ENCODE measurements at regions of chr20 and their contacts with region 1.

Region 1: DNA sequence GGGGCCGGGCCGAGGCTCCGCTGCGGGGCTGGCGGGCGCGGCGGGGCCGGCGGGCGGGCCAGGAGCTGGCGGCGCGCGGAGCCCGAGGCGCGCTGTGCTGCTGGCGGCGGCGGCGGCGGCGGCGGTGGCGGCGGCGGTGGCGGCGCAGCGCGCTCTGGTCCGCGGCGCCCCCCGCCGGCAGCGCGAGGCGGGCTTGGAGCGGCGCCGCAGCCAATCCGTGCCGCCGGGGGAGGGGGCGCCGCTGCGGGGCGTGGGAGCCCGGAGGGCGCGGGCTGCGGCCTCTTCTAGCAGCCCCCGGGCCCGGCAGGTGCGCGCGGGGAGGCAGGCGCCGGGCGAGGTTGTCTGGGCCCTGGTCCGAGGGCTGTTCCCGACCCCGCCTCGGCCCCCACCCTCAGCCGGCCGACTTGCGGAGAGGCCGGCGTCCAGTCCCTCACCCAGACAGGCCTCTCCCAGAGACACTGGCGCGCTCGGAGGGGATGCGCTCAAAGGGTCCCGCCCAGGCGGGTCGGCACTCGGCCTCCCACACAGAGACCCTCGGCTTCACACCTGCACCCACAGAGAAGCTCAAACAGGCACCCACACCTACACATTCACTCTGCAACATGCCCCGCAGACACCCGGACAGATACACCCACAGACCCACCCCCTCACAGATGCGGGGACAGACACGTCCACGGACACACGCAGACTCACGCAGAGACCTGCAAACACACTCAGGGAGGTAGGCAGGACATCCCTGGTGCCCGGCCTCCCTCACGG is at the start of gene RIMS4:
- DNase-seq: peak; percentile 25
- ATAC-seq: peak; percentile 76
- H3K4me3 Mint-ChIP-seq: peak within 1 kb of the TSS; percentile 28
- H3K27ac Mint-ChIP-seq: no peak within 1 kb of the TSS
- H3K4me1 Mint-ChIP-seq: peaks cover 3% of the 10 kb centered on the region
- H3K27me3 Mint-ChIP-seq: peaks cover 48% of the 10 kb centered on the region
- total RNA-seq, gene RIMS4: not detected

Region 2: DNA sequence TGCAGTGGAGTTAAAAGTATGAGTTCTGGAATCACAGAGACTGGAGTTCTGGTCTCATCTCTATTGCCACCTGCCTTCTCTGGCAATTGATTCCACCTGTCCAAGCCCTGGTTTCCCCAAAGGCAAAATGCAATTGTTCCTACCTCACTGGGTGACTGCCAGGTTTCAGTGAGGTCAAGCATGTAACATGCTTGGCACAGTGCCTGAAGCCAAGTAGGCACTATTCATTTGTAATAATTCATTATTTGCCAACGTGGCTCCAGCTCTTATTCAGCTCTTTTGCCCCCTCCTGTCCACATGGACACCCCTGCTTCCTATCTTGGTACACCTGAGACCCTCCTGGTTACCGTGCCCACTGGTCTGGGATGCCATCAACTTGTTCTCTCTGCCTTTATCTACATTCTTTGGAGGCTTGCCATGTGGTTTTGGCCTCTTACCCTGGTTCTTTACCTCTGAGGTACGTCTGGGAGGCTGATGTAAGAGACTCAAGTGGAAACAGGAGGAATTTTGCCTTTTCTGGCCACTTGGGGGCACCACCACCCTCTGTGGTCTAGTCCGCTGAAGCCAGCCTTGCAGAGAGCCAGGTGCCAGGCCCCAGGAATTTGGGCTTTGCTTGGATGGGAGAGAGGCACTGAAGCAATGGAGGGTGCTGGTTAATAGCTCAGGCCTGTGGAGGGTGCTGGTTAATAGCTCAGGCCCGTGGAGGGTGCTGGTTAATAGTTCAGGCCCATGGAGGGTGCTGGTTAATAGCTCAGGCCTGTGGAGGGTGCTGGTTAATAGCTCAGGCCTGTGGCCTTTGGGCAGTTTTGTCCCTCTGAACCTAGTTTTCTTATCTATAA is 63.2 kb before region 1 on chr20:
- CTCF ChIA-PET with region 1: interaction called, 4 read pairs
- POLR2A ChIA-PET with region 1: no interaction called
- intact Hi-C with region 1: loop called in 1 of 2 experiments (anchors 2 kb)
- DNase-seq: peak; percentile 87
- ATAC-seq: peak; percentile 60
- H3K4me3 Mint-ChIP-seq: peak overlapping the region; percentile 76
- H3K27ac Mint-ChIP-seq: peak overlapping the region; percentile 84
- H3K4me1 Mint-ChIP-seq: peaks cover 19% of the 10 kb centered on the region
- H3K27me3 Mint-ChIP-seq: peaks cover 21% of the 10 kb centered on the region

Measured in activated CD4-positive, alpha-beta T cell treated with anti-CD3 and anti-CD28 coated beads for 36 hours (primary cell).